ENCODE measurements at regions of chr5 and their contacts with region 1.

Region 1: GRCh38 chr5:65562731-65563701 is at the starts of genes CENPK and PPWD1:
- DNase-seq: peak; percentile 86 to 95
- H3K4me3 ChIP-seq: peak within 1 kb of the TSS; percentile 76 to 98 (median 90)
- H3K27ac ChIP-seq: peak within 1 kb of the TSS; percentile 95
- H3K4me1 ChIP-seq: peaks cover 0 to 2% (median 0%) of the 10 kb centered on the region in 4 experiments; a peak in 2 of 7 replicates
- H3K27me3 ChIP-seq: no peaks in the 10 kb centered on the region
- CTCF ChIP-seq: no peak; a peak in 1 of 4 replicates
- EP300 ChIP-seq: no peak
- POLR2A ChIP-seq: peak; percentile 62 to 97
- RAD21 ChIP-seq: no peak
- total RNA-seq, gene CENPK: 41.4 and 50.9 TPM in 2 replicates
- total RNA-seq, gene PPWD1: 34.0 and 35.7 TPM in 2 replicates

Region 2: GRCh38 chr5:65102828-65103711 is 459.9 kb before region 1 on chr5:
- CTCF ChIA-PET with region 1: no interaction called
- POLR2A ChIA-PET with region 1: no interaction called
- DNase-seq: peak in 1 of 2 experiments; percentile 75
- H3K4me3 ChIP-seq: peak overlapping the region; percentile 14 to 55 (median 26); a peak in 6 of 8 replicates
- H3K27ac ChIP-seq: peak overlapping the region; percentile 71; the same call in 1 of the 2 replicates
- H3K4me1 ChIP-seq: peaks cover 4 to 6% (median 5%) of the 10 kb centered on the region in 4 experiments; a peak in 6 of 7 replicates
- H3K27me3 ChIP-seq: no peaks in the 10 kb centered on the region
- CTCF ChIP-seq: no peak
- EP300 ChIP-seq: no peak
- POLR2A ChIP-seq: peak in 1 of 2 experiments; percentile 49; a peak in 2 of 3 replicates
- RAD21 ChIP-seq: no peak

Region 3: GRCh38 chr5:65588694-65589093 is 25.7 kb after region 1 on chr5:
- CTCF ChIA-PET with region 1: no interaction called
- POLR2A ChIA-PET with region 1: interaction called, 10 read pairs
- DNase-seq: no peak
- H3K4me3 ChIP-seq: no peak overlapping the region
- H3K27ac ChIP-seq: no peak overlapping the region
- H3K4me1 ChIP-seq: no peaks in the 10 kb centered on the region
- H3K27me3 ChIP-seq: no peaks in the 10 kb centered on the region
- CTCF ChIP-seq: no peak
- EP300 ChIP-seq: no peak
- POLR2A ChIP-seq: no peak
- RAD21 ChIP-seq: no peak